ENCODE measurements at regions of chr12 and their contacts with region 1.

Region 1: DNA sequence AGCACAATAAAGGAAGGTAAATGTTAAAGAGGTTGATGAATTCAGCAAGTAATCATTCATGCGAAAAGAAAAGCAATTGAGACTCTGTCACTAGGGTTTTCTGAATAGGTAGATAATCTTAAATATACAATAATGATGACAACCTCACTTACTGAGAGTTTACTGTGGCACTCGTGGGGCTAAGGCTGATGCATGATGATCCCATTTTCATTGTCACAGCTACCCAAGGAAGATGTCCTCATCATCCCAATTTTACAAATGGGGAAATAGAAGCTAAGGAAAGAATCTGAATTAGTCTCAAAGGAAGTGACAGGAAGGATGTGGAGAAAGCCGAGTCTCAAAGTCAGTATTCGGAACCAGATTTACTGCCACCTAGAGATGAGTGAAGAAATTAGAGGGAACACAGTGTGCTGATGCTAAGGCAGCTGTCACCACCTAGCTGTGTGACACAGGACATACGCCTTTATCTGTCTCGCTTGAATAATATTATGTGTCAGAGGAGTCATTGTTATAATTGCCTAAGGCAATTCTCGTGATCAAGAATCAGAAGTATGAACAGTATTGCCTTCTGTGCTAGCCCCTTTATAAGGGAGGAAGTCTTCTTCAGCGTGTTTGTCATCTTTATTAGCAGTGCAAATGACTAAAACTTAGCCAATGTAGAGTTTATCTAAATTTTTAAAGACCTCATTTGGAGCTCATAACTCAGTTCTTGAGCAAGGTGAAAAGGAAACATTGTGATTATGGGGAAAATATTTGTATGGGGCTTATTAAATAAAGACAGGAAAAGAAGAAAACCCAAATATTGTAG is 63.2 kb downstream of the ERGIC2 start:
- DNase-seq: no peak
- H3K4me3 ChIP-seq: no peak overlapping the region
- H3K27ac ChIP-seq: no peak overlapping the region
- H3K4me1 ChIP-seq: peaks cover 0 to 20% (median 13%) of the 10 kb centered on the region in 4 donors
- H3K27me3 ChIP-seq: no peaks in the 10 kb centered on the region
- CTCF ChIP-seq: peak; percentile 67 to 89 (median 74)
- EP300 ChIP-seq: no peak
- POLR2A ChIP-seq: no peak

Region 2: GRCh38 chr12:29073628-29074239 is 244.0 kb before region 1 on chr12:
- intact Hi-C with region 1: loop called (anchors 5 kb)
- DNase-seq: no peak
- H3K4me3 ChIP-seq: no peak overlapping the region
- H3K27ac ChIP-seq: no peak overlapping the region
- H3K4me1 ChIP-seq: no peaks in the 10 kb centered on the region
- H3K27me3 ChIP-seq: no peaks in the 10 kb centered on the region
- CTCF ChIP-seq: peak; percentile 68 to 76 (median 69)
- EP300 ChIP-seq: no peak
- POLR2A ChIP-seq: no peak

Region 3: GRCh38 chr12:29088611-29089219 is 229.0 kb before region 1 on chr12:
- intact Hi-C with region 1: loop called (anchors 5 kb)
- DNase-seq: no peak
- H3K4me3 ChIP-seq: no peak overlapping the region
- H3K27ac ChIP-seq: no peak overlapping the region
- H3K4me1 ChIP-seq: no peaks in the 10 kb centered on the region
- H3K27me3 ChIP-seq: no peaks in the 10 kb centered on the region
- CTCF ChIP-seq: peak; percentile 24 to 41 (median 29)
- EP300 ChIP-seq: no peak
- POLR2A ChIP-seq: no peak

Region 4: DNA sequence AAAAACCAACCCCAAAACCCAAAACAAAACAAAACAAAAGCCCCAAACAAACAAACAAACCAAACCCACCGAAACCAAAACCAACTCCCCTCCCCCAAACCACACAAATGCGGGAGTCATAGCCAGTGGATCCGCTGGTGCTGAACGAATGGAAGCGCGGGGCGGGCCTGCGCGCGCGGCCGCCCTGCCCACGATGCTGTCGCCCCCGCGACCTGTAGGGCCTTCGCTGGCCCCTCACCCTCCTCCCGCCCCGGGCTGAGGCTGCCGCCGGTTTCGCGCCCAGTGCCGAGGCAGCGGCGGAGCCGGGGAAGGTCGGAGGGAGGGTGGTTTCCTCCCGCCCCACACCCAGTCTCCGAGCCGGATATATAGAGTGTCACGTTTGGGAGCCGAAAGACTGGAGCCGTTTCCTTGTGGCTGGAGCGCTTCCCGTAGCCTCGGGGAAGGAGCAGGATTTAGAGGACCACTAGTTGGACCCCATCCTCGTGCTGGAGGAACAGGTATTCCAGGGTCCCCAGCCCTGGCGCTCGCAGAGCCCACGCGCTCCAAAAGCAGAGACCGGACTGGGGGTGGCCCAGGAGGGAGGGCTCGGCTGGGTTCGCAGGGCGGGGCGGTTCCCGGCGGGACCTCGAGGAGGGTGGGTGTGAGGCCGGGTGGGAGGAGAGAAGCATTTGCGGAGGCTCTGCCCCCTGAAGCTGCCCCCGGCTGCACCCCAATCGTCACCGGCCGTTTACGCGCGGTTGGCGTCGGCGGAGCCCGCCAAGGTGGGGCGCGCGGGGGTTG is 168.7 kb before region 1 on chr12 and contains the start of gene FAR2:
- intact Hi-C with region 1: loop called (anchors 10 kb)
- DNase-seq: no peak
- H3K4me3 ChIP-seq: peak within 1 kb of the TSS; percentile 81 to 91 (median 88)
- H3K27ac ChIP-seq: peak within 1 kb of the TSS; percentile 84 to 90 (median 88)
- H3K4me1 ChIP-seq: peaks cover 4 to 45% (median 42%) of the 10 kb centered on the region in 4 donors
- H3K27me3 ChIP-seq: no peaks in the 10 kb centered on the region
- CTCF ChIP-seq: no peak
- EP300 ChIP-seq: no peak
- POLR2A ChIP-seq: no peak
- total RNA-seq, gene FAR2: 11.6 to 15.0 (median 11.9) TPM

Region 5: DNA sequence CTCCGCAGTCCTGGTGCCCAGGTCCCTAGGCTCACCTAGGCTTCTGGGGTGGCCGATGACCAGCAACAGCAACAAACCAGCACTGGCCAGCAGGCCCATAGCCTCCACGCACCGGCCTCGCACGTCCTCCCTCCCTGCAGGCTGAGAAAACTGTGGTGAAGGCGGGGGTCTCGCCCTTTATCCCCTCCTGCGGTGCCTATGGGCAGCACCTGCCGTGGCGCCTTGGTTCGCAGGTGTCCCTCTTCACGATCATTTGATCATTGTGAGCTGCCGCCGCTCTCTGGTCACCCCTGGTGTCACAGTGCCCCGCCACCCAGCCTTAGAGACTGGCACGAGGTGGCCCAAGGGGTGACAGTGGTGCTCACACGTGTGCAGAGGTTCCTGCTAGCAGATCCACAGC is 179.8 kb after region 1 on chr12 and contains the start of gene OVCH1:
- intact Hi-C with region 1: no loop called
- DNase-seq: no peak
- H3K4me3 ChIP-seq: no peak within 1 kb of the TSS
- H3K27ac ChIP-seq: no peak within 1 kb of the TSS
- H3K4me1 ChIP-seq: no peaks in the 10 kb centered on the region
- H3K27me3 ChIP-seq: no peaks in the 10 kb centered on the region
- CTCF ChIP-seq: no peak
- EP300 ChIP-seq: no peak
- POLR2A ChIP-seq: no peak
- total RNA-seq, gene OVCH1: 0.17 to 0.78 TPM in 2 of 4 donors, not detected in the others

Measured in esophagus muscularis mucosa (tissue), 4 donors.